Mammary epithelial cell (primary cell): ENCODE measurements at regions of chr18 and their contacts with region 1.

Region 1: DNA sequence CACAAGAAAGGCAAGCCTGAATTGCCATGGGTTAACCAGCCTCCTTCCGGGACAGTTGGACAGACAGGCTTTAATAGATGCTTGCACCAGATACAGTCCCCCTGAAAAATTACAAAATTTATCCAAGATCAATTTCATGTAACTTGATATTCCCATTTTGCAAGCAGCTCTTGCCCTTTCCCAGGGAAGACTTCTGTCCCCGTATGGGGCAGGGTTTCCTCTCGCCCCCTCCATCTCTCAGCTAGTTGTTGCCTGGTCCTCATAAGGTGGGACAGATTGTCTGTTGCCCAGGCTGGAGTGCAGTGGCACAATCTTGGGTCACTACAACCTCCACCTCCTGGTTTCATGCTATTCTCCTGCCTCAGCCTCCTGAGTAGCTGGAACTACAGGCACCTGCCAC is 61.2 kb downstream of the TTC39C start:
- DNase-seq: no peak
- H3K4me3 ChIP-seq: no peak overlapping the region
- H3K27ac ChIP-seq: no peak overlapping the region
- H3K4me1 ChIP-seq: peaks cover 5% of the 10 kb centered on the region
- H3K27me3 ChIP-seq: no peaks in the 10 kb centered on the region
- CTCF ChIP-seq: no peak

Region 2: GRCh38 chr18:23998811-23999210 is 76.9 kb before region 1 on chr18:
- CTCF ChIA-PET with region 1: no interaction called
- dilution Hi-C with region 1: no loop called
- in situ Hi-C with region 1: no loop called
- intact Hi-C with region 1: loop called (anchors 1 kb)
- DNase-seq: peak; percentile 99
- H3K4me3 ChIP-seq: no peak overlapping the region
- H3K27ac ChIP-seq: peak overlapping the region; percentile 72
- H3K4me1 ChIP-seq: peaks cover 32% of the 10 kb centered on the region
- H3K27me3 ChIP-seq: no peaks in the 10 kb centered on the region
- CTCF ChIP-seq: no peak

Region 3: GRCh38 chr18:24112874-24113615 is 37.3 kb after region 1 on chr18:
- CTCF ChIA-PET with region 1: no interaction called
- dilution Hi-C with region 1: no loop called
- in situ Hi-C with region 1: no loop called
- intact Hi-C with region 1: loop called (anchors 5 kb)
- DNase-seq: peak; percentile 84
- H3K4me3 ChIP-seq: no peak overlapping the region
- H3K27ac ChIP-seq: no peak overlapping the region
- H3K4me1 ChIP-seq: peaks cover 16% of the 10 kb centered on the region
- H3K27me3 ChIP-seq: no peaks in the 10 kb centered on the region
- CTCF ChIP-seq: no peak